Dendritic cell treated with granulocyte-macrophage colony-stimulating factor and Interleukin-4, amounts not matched to agents 40 ng/mL and 50 ng/mL, for 4 days (primary cell): ENCODE measurements at regions of chr15 and their contacts with region 1.

Region 1: GRCh38 chr15:66287461-66288057 is 5.8 kb upstream of the DIS3L start:
- H3K4me3 Mint-ChIP-seq: no peak overlapping the region
- H3K27ac Mint-ChIP-seq: no peak overlapping the region
- H3K4me1 Mint-ChIP-seq: peaks cover 5% of the 10 kb centered on the region
- H3K27me3 Mint-ChIP-seq: peaks cover 3% of the 10 kb centered on the region

Region 2: DNA sequence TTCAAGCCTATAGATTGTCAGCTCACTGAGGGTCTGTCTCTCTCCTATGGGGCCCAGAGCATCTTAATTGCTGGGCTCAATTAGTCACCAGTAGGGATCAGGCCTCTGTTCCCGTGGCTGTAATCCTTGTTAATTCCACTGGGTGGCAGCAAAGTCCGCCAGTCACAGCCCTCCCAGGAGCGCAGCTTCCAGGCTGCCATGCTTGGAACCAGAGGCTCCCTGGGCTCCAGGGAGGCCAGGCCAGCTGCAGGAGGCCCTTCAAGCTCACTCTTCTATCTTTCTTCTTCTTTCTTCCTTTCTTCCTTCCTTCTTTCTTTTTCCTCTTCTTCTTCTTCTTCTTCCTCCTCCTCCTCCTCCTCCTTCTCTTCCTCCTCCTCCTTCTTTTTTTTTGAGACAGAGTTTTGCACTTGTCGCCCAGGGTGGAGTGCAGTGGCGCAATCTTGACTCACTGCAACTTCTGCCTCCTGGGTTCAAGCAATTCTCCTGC is 968.6 kb before region 1 on chr15:
- intact Hi-C with region 1: no loop called
- H3K4me3 Mint-ChIP-seq: no peak overlapping the region
- H3K27ac Mint-ChIP-seq: no peak overlapping the region
- H3K4me1 Mint-ChIP-seq: peaks cover 12% of the 10 kb centered on the region
- H3K27me3 Mint-ChIP-seq: peaks cover 30% of the 10 kb centered on the region

Region 3: GRCh38 chr15:65980824-65981456 is 306.6 kb before region 1 on chr15:
- intact Hi-C with region 1: loop called (anchors 5 kb)
- H3K4me3 Mint-ChIP-seq: no peak overlapping the region
- H3K27ac Mint-ChIP-seq: no peak overlapping the region
- H3K4me1 Mint-ChIP-seq: no peaks in the 10 kb centered on the region
- H3K27me3 Mint-ChIP-seq: peaks cover 45% of the 10 kb centered on the region

Region 4: GRCh38 chr15:66401130-66402021 is 113.8 kb after region 1 on chr15:
- intact Hi-C with region 1: no loop called
- H3K4me3 Mint-ChIP-seq: no peak overlapping the region
- H3K27ac Mint-ChIP-seq: no peak overlapping the region
- H3K4me1 Mint-ChIP-seq: peaks cover 74% of the 10 kb centered on the region
- H3K27me3 Mint-ChIP-seq: no peaks in the 10 kb centered on the region